ENCODE measurements at regions of chr6 and their contacts with region 1.

Region 1: DNA sequence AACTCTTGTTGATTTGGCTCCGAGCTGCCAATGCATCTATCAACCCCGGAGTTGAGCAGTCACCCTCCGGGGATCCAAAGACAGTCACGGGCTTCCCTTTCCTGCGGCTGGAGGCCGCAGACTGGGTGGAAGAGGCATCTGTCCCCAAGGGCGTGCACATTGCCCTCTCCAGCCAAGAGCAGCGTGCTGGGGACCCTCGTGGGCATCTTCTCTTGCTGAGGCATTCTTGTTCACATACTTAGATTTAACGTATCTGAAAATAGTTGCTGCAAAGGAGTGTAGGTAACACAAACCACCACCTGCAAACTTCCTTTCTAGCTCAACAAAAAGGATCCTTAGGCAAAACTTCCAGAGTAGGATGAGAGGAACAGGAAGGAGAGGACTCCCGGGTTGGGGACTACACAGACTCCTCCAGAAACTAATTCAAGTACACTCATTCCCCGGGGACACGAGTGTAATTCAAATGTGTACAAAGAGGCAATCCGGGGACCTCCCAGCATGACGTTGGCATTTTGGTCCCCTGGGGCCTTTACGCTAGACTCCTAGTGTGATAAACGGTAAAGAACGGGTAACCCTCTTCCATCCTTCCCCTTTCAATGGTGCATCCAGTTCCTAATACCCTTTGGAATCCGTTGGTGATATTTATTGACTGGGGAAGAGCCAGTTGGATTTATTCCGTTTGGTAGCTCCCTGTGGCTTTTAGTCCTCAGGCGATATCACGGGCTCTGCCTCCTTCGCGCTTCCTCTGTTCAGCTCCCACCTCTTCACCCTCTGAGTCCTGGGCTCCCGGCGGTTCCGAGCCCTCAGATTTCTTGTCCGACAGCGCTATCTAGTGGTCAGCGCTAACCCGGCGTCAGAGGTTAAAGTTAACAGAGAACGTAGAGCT is 2.7 kb upstream of the COL12A1 start:
- DNase-seq: peak; percentile 84 to 94 (median 92)
- ATAC-seq: peak; percentile 78 to 83
- H3K4me3 ChIP-seq: peak overlapping the region; percentile 43
- H3K27ac ChIP-seq: no peak overlapping the region
- H3K4me1 ChIP-seq: peaks cover 3% of the 10 kb centered on the region
- H3K27me3 ChIP-seq: no peaks in the 10 kb centered on the region

Region 2: GRCh38 chr6:73743556-73743955 is 1465.0 kb before region 1 on chr6:
- intact Hi-C with region 1: loop called in 2 of 4 experiments (anchors 5 to 10 kb)
- DNase-seq: no peak
- ATAC-seq: no peak
- H3K4me3 ChIP-seq: no peak overlapping the region
- H3K27ac ChIP-seq: no peak overlapping the region
- H3K4me1 ChIP-seq: no peaks in the 10 kb centered on the region
- H3K27me3 ChIP-seq: no peaks in the 10 kb centered on the region

Region 3: DNA sequence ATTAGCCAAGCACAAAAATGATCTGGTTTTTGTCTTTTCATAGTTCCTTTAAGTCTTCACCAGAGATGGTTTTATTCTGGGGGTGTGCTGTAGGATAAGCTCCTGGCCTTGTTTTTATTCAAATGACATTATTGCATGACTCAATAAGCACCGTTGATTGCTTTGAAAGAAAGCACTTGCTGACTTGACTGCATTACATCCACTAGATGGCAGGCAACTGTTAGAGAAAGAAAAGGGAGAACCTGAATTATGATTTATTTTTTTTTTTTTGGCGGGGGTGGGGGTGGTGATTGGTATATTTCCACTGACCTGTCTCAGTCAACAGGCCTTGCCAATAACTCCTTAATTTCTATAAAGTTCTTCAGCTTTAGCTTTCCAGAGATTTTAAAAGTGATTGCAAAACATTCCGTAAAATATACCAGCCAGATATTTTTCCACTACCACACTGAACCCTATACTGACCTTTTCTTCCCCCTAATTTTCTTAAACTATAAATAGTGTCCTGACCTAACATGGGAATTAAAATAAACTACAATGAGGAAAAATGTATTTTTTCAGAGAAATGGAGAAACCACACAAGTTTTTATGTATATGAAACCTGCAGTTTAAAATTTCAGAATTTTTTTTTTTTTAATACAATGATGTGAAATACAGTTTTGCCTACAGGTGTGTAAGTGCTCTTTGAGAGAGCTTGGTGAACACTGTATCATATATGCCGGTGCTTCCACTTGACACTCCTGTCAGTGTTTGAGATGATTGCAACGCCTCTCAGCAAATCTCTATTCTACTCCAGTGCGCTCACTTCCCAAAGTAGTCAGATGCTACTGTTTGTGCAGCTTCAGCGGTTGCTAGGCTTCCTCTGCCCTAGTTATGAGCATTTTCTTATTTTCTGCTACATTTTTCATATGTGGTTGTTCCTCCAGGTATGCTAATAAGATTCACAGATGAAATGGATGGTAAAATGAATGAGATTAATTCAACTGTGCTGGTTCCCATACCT is 1238.3 kb before region 1 on chr6:
- intact Hi-C with region 1: loop called in 3 of 4 experiments (anchors 5 to 10 kb)
- DNase-seq: no peak
- ATAC-seq: peak in 1 of 2 donors; percentile 33
- H3K4me3 ChIP-seq: no peak overlapping the region
- H3K27ac ChIP-seq: no peak overlapping the region
- H3K4me1 ChIP-seq: no peaks in the 10 kb centered on the region
- H3K27me3 ChIP-seq: no peaks in the 10 kb centered on the region

Region 4: DNA sequence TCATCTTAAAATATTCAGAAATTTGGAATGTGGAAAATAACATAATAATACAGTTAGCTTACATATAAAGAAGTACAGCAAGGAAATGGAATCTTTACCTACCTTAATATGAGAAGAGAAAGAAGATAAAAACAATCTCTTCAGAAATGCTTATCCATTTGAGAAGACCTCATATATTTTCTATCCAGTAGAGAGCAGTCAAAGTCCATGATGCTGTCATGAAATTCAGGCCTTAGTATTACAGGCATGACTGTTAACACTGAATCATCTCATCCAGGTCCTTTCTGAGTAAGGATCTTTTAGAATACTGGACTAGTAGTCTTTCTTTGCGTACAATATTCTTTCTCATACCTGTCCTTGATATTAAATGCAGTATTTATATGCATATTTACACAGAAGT is 799.1 kb before region 1 on chr6:
- intact Hi-C with region 1: loop called in 2 of 4 experiments (anchors 10 kb)
- DNase-seq: no peak
- ATAC-seq: peak; percentile 61 to 64
- H3K4me3 ChIP-seq: no peak overlapping the region
- H3K27ac ChIP-seq: no peak overlapping the region
- H3K4me1 ChIP-seq: no peaks in the 10 kb centered on the region
- H3K27me3 ChIP-seq: no peaks in the 10 kb centered on the region

Region 5: DNA sequence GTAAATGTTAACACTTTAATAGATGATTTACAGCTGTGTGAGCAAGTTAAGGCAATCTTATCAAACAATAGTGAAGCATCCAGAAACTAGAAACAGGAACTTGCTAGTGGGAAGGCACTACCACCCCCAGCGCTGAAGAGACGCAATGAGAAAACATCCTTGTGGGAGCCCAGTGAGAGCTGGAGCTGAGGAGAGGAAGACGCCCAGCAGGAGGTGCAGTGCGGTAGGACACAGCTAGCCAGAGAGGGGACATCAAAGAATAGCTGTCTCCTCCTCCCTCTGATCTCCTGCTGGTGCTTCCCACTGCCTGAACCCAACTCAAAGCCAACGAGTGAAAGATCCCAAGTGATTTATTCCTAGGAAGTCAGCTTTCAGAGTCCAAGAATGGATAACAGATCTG is 143.0 kb before region 1 on chr6:
- intact Hi-C with region 1: loop called in 1 of 4 experiments (anchors 10 kb)
- DNase-seq: peak in 1 of 3 donors; percentile 62
- ATAC-seq: peak; percentile 40 to 55
- H3K4me3 ChIP-seq: no peak overlapping the region
- H3K27ac ChIP-seq: no peak overlapping the region
- H3K4me1 ChIP-seq: no peaks in the 10 kb centered on the region
- H3K27me3 ChIP-seq: no peaks in the 10 kb centered on the region

Region 6: GRCh38 chr6:75284632-75285286 is 76.2 kb after region 1 on chr6 and contains the start of gene TMEM30A:
- intact Hi-C with region 1: no loop called
- DNase-seq: peak; percentile 98
- ATAC-seq: peak; percentile 100
- H3K4me3 ChIP-seq: peak within 1 kb of the TSS; percentile 97
- H3K27ac ChIP-seq: peak within 1 kb of the TSS; percentile 85
- H3K4me1 ChIP-seq: no peaks in the 10 kb centered on the region
- H3K27me3 ChIP-seq: no peaks in the 10 kb centered on the region
- total RNA-seq, gene TMEM30A: 58.6 to 70.7 (median 65.5) TPM

Measured in right cardiac atrium (tissue), 5 donors.